ENCODE measurements at regions of chr11 and their contacts with region 1.

Region 1: DNA sequence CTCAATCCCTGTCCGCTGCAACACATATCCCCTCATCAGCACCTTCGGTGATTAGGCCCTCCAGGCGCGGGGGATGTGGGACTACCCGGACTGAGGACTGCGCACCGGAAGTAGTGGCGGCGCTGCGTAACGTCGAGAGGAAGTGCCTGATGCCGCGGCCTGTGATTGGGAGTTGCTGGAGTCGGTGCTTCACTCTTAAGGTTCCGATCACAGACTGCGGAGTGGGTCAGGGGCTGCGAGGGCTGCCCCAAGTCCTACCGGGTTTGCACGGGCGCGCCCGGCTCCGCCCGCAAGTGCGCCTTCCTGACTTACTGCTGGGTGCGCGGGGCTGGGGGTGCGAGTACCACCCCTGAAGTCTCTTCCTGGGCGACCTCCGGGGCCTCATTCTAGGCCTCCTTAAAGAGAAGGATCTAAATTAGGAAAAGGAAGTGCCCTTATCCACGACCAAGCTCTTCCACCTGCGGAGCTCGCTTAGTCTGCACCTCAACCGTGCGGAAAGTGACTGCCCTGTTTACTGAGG is at the start of gene ALKBH3:
- DNase-seq: peak; percentile 81 to 95 (median 91)
- ATAC-seq: peak; percentile 98
- H3K4me3 ChIP-seq: peak within 1 kb of the TSS; percentile 70 to 75
- H3K4me3 Mint-ChIP-seq: peak within 1 kb of the TSS; percentile 97
- H3K27ac ChIP-seq: peak within 1 kb of the TSS; percentile 51 to 74
- H3K27ac Mint-ChIP-seq: peak within 1 kb of the TSS; percentile 97
- H3K4me1 ChIP-seq: peaks cover 20% of the 10 kb centered on the region
- H3K4me1 Mint-ChIP-seq: peaks cover 39% of the 10 kb centered on the region
- H3K27me3 ChIP-seq: peaks cover 0 to 3% of the 10 kb centered on the region in 2 experiments
- H3K27me3 Mint-ChIP-seq: peaks cover 20% of the 10 kb centered on the region
- CTCF ChIP-seq: no peak
- total RNA-seq, gene ALKBH3: 14.5 to 19.4 TPM

Region 2: DNA sequence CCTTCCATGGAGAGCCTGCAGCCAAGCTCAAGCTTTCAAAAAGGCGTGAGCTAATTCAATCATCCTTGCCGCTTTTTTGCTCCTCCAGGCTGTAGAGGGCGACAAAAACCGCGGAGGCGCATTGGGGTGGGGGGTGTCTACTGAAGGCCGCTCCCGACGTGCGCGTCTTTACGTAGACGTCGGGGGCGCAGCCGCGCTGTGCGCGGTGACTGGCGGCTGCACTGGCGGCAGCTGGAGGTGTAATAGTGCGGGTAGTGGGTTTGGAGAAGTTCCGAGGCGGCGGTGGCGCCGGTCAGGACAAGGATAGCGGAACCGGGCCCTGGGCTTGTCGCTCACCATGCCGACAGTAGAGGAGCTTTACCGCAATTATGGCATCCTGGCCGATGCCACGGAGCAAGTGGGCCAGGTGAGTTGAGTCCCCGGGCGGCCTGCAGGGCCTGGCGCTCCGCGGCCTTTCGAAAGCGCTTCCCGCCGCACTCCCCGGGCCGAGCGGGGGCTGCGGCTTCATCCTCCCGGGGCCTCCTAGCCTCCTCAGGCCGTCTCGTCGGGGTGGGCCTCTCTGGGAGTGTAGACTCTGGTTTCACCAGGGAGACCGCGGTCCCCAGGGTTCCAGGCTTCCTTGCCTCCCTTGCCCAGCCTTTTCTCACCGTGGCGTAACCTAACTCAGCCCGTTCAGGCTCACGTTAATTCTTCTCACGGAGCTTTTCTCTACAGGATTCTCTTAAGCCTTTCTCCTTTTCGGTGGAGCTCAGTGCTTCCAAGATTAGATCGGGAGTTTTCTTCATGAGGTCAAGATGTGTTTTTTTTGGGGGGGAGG is 568.7 kb before region 1 on chr11 and contains the start of gene API5:
- CTCF ChIA-PET with region 1: no interaction called
- POLR2A ChIA-PET with region 1: no interaction called
- intact Hi-C with region 1: loop called (anchors 2 to 5 kb)
- DNase-seq: peak; percentile 84 to 96 (median 93)
- ATAC-seq: peak; percentile 94
- H3K4me3 ChIP-seq: peak within 1 kb of the TSS; percentile 84 to 85
- H3K4me3 Mint-ChIP-seq: peak within 1 kb of the TSS; percentile 92
- H3K27ac ChIP-seq: peak within 1 kb of the TSS; percentile 64 to 75
- H3K27ac Mint-ChIP-seq: peak within 1 kb of the TSS; percentile 88
- H3K4me1 ChIP-seq: peaks cover 34% of the 10 kb centered on the region
- H3K4me1 Mint-ChIP-seq: peaks cover 50% of the 10 kb centered on the region
- H3K27me3 ChIP-seq: no peaks in the 10 kb centered on the region
- H3K27me3 Mint-ChIP-seq: no peaks in the 10 kb centered on the region
- CTCF ChIP-seq: peak; percentile 63
- total RNA-seq, gene API5: 78.4 to 80.6 TPM

Region 3: GRCh38 chr11:43643898-43644620 is 236.6 kb before region 1 on chr11:
- CTCF ChIA-PET with region 1: no interaction called
- POLR2A ChIA-PET with region 1: no interaction called
- intact Hi-C with region 1: loop called (anchors 1 to 2 kb)
- DNase-seq: peak; percentile 72 to 91 (median 85)
- ATAC-seq: peak; percentile 99
- H3K4me3 ChIP-seq: peak overlapping the region; percentile 73 to 76
- H3K4me3 Mint-ChIP-seq: peak overlapping the region; percentile 84
- H3K27ac ChIP-seq: peak overlapping the region; percentile 52 to 66
- H3K27ac Mint-ChIP-seq: peak overlapping the region; percentile 91
- H3K4me1 ChIP-seq: peaks cover 8% of the 10 kb centered on the region
- H3K4me1 Mint-ChIP-seq: peaks cover 26% of the 10 kb centered on the region
- H3K27me3 ChIP-seq: no peaks in the 10 kb centered on the region
- H3K27me3 Mint-ChIP-seq: peaks cover 15% of the 10 kb centered on the region
- CTCF ChIP-seq: no peak

Region 4: DNA sequence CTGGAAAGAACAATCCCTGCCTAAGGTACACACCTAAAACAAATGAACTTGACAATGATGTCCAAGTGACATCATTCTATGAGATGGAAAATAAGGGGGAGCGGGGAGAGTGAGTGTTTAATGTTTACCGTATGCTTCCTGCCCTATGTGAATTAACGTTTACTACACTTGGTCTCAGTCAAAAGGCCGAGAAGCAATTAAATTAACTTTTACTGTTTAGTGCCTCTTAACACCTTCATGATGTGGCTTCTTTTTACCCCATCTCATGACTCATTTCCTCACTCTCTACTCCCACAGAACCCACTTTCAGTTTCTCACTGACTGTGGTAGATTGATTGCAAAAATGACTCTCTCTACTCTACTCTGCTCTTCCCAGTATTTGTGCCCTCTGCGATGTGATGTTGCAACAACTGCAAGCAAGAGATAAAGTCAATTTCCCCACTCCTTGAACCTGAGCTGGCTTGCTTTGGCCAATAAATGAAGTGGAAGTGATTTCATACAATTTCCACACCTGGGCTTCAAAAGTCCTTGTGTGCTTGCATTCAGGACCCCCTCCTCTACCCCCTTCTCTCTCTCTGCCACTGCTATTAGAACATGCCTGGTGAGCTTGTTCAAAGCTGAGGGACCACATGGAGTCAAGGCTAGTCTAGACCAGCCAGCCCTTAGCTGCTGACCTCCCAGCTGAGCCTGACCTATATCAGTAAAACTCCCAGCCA is 11.7 kb before region 1 on chr11:
- CTCF ChIA-PET with region 1: no interaction called
- POLR2A ChIA-PET with region 1: no interaction called
- intact Hi-C with region 1: loop called in 1 of 2 experiments (anchors 1 kb)
- DNase-seq: peak in 8 of 9 experiments; percentile 10 to 87 (median 32)
- ATAC-seq: peak; percentile 98
- H3K4me3 ChIP-seq: peak overlapping the region; percentile 0 to 4
- H3K4me3 Mint-ChIP-seq: peak overlapping the region; percentile 33
- H3K27ac ChIP-seq: peak overlapping the region in 1 of 2 experiments; percentile 82
- H3K27ac Mint-ChIP-seq: peak overlapping the region; percentile 76
- H3K4me1 ChIP-seq: peaks cover 16% of the 10 kb centered on the region
- H3K4me1 Mint-ChIP-seq: peaks cover 15% of the 10 kb centered on the region
- H3K27me3 ChIP-seq: no peaks in the 10 kb centered on the region
- H3K27me3 Mint-ChIP-seq: peaks cover 22% of the 10 kb centered on the region
- CTCF ChIP-seq: no peak

Region 5: GRCh38 chr11:44095506-44096394 is 215.1 kb after region 1 on chr11 and contains the start of gene EXT2:
- CTCF ChIA-PET with region 1: no interaction called
- POLR2A ChIA-PET with region 1: no interaction called
- intact Hi-C with region 1: loop called (anchors 10 kb)
- DNase-seq: peak; percentile 67 to 91 (median 87)
- ATAC-seq: peak; percentile 95
- H3K4me3 ChIP-seq: peak within 1 kb of the TSS; percentile 68 to 73
- H3K4me3 Mint-ChIP-seq: peak within 1 kb of the TSS; percentile 88
- H3K27ac ChIP-seq: peak within 1 kb of the TSS in 1 of 2 experiments; percentile 25
- H3K27ac Mint-ChIP-seq: peak within 1 kb of the TSS; percentile 57
- H3K4me1 ChIP-seq: peaks cover 26% of the 10 kb centered on the region
- H3K4me1 Mint-ChIP-seq: peaks cover 40% of the 10 kb centered on the region
- H3K27me3 ChIP-seq: no peaks in the 10 kb centered on the region
- H3K27me3 Mint-ChIP-seq: no peaks in the 10 kb centered on the region
- CTCF ChIP-seq: peak; percentile 91
- total RNA-seq, gene EXT2: 15.8 to 16.1 TPM